Ascending aorta (tissue), 2 donors: ENCODE measurements at regions of chr5 and their contacts with region 1.

Region 1: GRCh38 chr5:34656001-34656699 is at the start of gene RAI14:
- DNase-seq: peak; percentile 40 to 93
- H3K4me3 ChIP-seq: peak within 1 kb of the TSS; percentile 84 to 94
- H3K27ac ChIP-seq: peak within 1 kb of the TSS; percentile 96 to 99
- H3K4me1 ChIP-seq: peaks cover 8 to 23% of the 10 kb centered on the region in 2 donors
- H3K27me3 ChIP-seq: no peaks in the 10 kb centered on the region
- CTCF ChIP-seq: peak in 1 of 3 experiments; percentile 10
- total RNA-seq, gene RAI14: 134 TPM

Region 2: DNA sequence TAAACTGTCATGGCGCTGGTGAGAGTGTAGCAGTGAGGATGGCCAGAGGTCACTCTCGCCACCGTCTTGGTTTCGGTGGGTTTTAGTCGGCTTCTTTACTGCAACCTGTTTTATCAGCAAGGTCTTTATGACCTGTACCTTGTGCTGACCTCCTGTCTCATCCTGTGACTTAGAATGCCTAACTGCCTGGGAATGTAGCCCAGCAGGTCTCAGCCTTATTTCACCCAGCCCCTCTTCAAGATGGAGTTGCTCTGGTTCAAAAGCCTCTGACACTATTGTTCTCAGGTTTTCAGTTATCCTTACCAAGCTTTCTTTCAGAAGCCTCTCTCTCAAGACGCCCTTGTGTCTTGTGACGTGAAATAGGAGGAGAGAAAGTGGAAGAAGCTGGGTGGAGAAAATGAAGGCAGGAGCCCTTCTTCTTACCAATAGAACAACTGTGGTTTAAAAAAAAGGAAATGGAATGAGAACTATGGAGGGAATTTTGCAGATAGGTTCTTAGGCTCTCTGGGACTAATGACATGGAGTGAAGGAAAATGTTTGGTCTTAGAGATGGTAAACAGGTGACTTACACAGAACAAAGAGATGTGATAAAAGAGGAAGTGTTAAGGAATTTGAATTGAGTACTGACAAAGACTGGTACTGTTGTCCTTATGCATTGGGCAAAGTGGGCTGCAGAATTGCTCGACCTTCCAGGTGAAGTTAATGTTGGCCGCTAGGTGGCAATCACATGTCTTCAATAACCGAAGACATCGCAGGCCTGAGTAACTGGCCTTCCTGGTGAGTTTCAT is 133.4 kb before region 1 on chr5:
- intact Hi-C with region 1: loop called (anchors 2 kb)
- DNase-seq: peak in 1 of 2 donors; percentile 89
- H3K4me3 ChIP-seq: no peak overlapping the region
- H3K27ac ChIP-seq: peak overlapping the region; percentile 81 to 82
- H3K4me1 ChIP-seq: peaks cover 0 to 28% of the 10 kb centered on the region in 2 donors
- H3K27me3 ChIP-seq: no peaks in the 10 kb centered on the region
- CTCF ChIP-seq: peak; percentile 65 to 70 (median 68)

Region 3: GRCh38 chr5:34676416-34676815 is 20.3 kb after region 1 on chr5:
- intact Hi-C with region 1: loop called (anchors 1 kb)
- DNase-seq: peak in 1 of 2 donors; percentile 69
- H3K4me3 ChIP-seq: no peak overlapping the region
- H3K27ac ChIP-seq: peak overlapping the region in 1 of 2 donors; percentile 93
- H3K4me1 ChIP-seq: peaks cover 5 to 41% of the 10 kb centered on the region in 2 donors
- H3K27me3 ChIP-seq: no peaks in the 10 kb centered on the region
- CTCF ChIP-seq: no peak

Region 4: GRCh38 chr5:34695275-34696027 is 39.3 kb after region 1 on chr5:
- intact Hi-C with region 1: no loop called
- DNase-seq: no peak
- H3K4me3 ChIP-seq: peak overlapping the region; percentile 9
- H3K27ac ChIP-seq: peak overlapping the region; percentile 63 to 70
- H3K4me1 ChIP-seq: peaks cover 16 to 43% of the 10 kb centered on the region in 2 donors
- H3K27me3 ChIP-seq: no peaks in the 10 kb centered on the region
- CTCF ChIP-seq: no peak

Region 5: GRCh38 chr5:34735491-34736363 is 79.6 kb after region 1 on chr5:
- intact Hi-C with region 1: loop called (anchors 5 kb)
- DNase-seq: no peak
- H3K4me3 ChIP-seq: no peak overlapping the region
- H3K27ac ChIP-seq: peak overlapping the region in 1 of 2 donors; percentile 77
- H3K4me1 ChIP-seq: peaks cover 4 to 33% of the 10 kb centered on the region in 2 donors
- H3K27me3 ChIP-seq: no peaks in the 10 kb centered on the region
- CTCF ChIP-seq: no peak

Region 6: GRCh38 chr5:34898258-34898895 is 242.2 kb after region 1 on chr5:
- intact Hi-C with region 1: loop called (anchors 5 kb)
- DNase-seq: peak in 1 of 2 donors; percentile 73
- H3K4me3 ChIP-seq: no peak overlapping the region
- H3K27ac ChIP-seq: no peak overlapping the region
- H3K4me1 ChIP-seq: no peaks in the 10 kb centered on the region
- H3K27me3 ChIP-seq: no peaks in the 10 kb centered on the region
- CTCF ChIP-seq: peak; percentile 80 to 90 (median 85)